ENCODE measurements at regions of chr10 and their contacts with region 1.

Region 1: GRCh38 chr10:11909618-11910017 is 86.5 kb downstream of the PROSER2 start:
- DNase-seq: no peak
- ATAC-seq: peak in 5 of 8 donors; percentile 11 to 75 (median 46)
- H3K4me3 ChIP-seq: no peak overlapping the region
- H3K27ac ChIP-seq: no peak overlapping the region
- H3K4me1 ChIP-seq: no peaks in the 10 kb centered on the region
- H3K27me3 ChIP-seq: peaks cover 0 to 3% (median 0%) of the 10 kb centered on the region in 7 donors
- CTCF ChIP-seq: no peak

Region 2: GRCh38 chr10:11958956-11959355 is 49.3 kb after region 1 on chr10:
- intact Hi-C with region 1: loop called in 1 of 10 experiments (anchors 2 kb)
- DNase-seq: no peak
- ATAC-seq: no peak
- H3K4me3 ChIP-seq: no peak overlapping the region
- H3K27ac ChIP-seq: no peak overlapping the region
- H3K4me1 ChIP-seq: no peaks in the 10 kb centered on the region
- H3K27me3 ChIP-seq: no peaks in the 10 kb centered on the region
- CTCF ChIP-seq: no peak

Measured in heart right ventricle (tissue), 16 donors.